ENCODE measurements at regions of chr9 and their contacts with region 1.

Region 1: GRCh38 chr9:97982683-97983588 is at the start of gene ANP32B:
- DNase-seq: peak; percentile 93 to 95
- ATAC-seq: peak; percentile 79 to 91 (median 86)
- H3K4me3 ChIP-seq: peak within 1 kb of the TSS; percentile 91
- H3K27ac ChIP-seq: peak within 1 kb of the TSS; percentile 98
- H3K4me1 ChIP-seq: peaks cover 41% of the 10 kb centered on the region
- H3K27me3 ChIP-seq: no peaks in the 10 kb centered on the region
- CTCF ChIP-seq: peak; percentile 97
- total RNA-seq, gene ANP32B: 52.8 to 73.9 (median 66.5) TPM

Region 2: GRCh38 chr9:97696803-97697601 is 285.9 kb before region 1 on chr9 and contains the start of gene XPA:
- intact Hi-C with region 1: loop called in 1 of 2 experiments (anchors 5 kb)
- DNase-seq: peak; percentile 98 to 99
- ATAC-seq: peak; percentile 99
- H3K4me3 ChIP-seq: peak within 1 kb of the TSS; percentile 91
- H3K27ac ChIP-seq: peak within 1 kb of the TSS; percentile 95
- H3K4me1 ChIP-seq: peaks cover 29% of the 10 kb centered on the region
- H3K27me3 ChIP-seq: no peaks in the 10 kb centered on the region
- CTCF ChIP-seq: no peak
- total RNA-seq, gene XPA: 9.0 to 17.6 (median 10.9) TPM

Region 3: GRCh38 chr9:98018347-98018746 is 35.4 kb after region 1 on chr9:
- intact Hi-C with region 1: loop called in 1 of 2 experiments (anchors 5 kb)
- DNase-seq: no peak
- ATAC-seq: peak; percentile 59 to 72 (median 63)
- H3K4me3 ChIP-seq: no peak overlapping the region
- H3K27ac ChIP-seq: peak overlapping the region; percentile 65
- H3K4me1 ChIP-seq: peaks cover 45% of the 10 kb centered on the region
- H3K27me3 ChIP-seq: no peaks in the 10 kb centered on the region
- CTCF ChIP-seq: no peak

Region 4: DNA sequence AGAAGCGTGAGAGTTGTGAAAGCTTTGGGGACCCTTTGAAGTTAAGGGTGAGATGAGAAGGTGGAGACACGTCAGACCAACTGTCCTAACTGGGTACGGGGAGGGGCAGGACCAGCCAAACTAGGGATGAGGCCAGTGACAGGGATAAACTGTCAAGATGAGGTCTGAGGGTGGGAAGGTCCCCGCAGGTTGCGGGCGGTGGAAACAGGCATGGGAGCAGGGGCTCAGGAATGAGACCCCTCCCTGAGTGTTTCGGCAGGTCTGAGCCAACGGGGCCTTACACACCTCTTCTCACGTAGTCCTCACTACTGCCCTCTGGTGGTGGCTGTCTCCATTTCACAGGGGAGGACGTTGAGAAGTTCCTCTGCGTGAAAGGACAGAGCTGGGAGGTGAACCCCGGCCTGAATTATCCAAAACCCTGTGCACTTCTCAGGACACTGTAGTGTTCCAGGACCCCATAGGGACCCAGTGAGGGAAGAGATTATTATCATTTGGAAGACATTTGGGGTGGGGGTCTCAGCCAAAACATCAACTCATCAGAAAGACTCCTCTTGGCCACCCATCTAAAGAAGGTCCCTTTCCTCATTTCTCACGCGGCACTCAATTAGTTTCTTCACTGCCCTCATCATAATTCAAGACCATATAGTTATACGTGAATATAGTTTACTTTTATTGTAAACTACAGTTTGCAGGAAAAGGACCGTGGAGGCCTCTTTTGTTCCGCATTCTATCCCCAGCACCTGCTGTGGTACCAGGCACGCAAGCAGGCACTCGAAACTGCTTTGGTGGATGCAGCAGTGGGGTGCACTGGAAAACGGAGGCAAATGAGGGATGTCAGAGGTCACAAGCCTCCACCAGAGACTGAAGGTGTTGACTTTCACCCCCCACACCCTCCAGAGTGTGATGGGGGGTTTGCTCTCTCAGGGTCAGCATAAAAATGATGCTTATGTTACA is 51.9 kb after region 1 on chr9:
- intact Hi-C with region 1: loop called (anchors 1 to 5 kb)
- DNase-seq: peak; percentile 79 to 88
- ATAC-seq: peak; percentile 53 to 76 (median 74)
- H3K4me3 ChIP-seq: peak overlapping the region; percentile 15
- H3K27ac ChIP-seq: peak overlapping the region; percentile 87
- H3K4me1 ChIP-seq: peaks cover 31% of the 10 kb centered on the region
- H3K27me3 ChIP-seq: no peaks in the 10 kb centered on the region
- CTCF ChIP-seq: peak; percentile 89

Region 5: GRCh38 chr9:98056269-98057137 is 73.6 kb after region 1 on chr9 and contains the start of gene NANS:
- intact Hi-C with region 1: loop called in 1 of 2 experiments (anchors 5 kb)
- DNase-seq: peak; percentile 94 to 96
- ATAC-seq: peak; percentile 96 to 99 (median 98)
- H3K4me3 ChIP-seq: peak within 1 kb of the TSS; percentile 76
- H3K27ac ChIP-seq: peak within 1 kb of the TSS; percentile 92
- H3K4me1 ChIP-seq: peaks cover 12% of the 10 kb centered on the region
- H3K27me3 ChIP-seq: no peaks in the 10 kb centered on the region
- CTCF ChIP-seq: no peak
- total RNA-seq, gene NANS: 21.1 to 53.8 (median 26.5) TPM